ENCODE measurements at regions of chr18 and their contacts with region 1.

Region 1: DNA sequence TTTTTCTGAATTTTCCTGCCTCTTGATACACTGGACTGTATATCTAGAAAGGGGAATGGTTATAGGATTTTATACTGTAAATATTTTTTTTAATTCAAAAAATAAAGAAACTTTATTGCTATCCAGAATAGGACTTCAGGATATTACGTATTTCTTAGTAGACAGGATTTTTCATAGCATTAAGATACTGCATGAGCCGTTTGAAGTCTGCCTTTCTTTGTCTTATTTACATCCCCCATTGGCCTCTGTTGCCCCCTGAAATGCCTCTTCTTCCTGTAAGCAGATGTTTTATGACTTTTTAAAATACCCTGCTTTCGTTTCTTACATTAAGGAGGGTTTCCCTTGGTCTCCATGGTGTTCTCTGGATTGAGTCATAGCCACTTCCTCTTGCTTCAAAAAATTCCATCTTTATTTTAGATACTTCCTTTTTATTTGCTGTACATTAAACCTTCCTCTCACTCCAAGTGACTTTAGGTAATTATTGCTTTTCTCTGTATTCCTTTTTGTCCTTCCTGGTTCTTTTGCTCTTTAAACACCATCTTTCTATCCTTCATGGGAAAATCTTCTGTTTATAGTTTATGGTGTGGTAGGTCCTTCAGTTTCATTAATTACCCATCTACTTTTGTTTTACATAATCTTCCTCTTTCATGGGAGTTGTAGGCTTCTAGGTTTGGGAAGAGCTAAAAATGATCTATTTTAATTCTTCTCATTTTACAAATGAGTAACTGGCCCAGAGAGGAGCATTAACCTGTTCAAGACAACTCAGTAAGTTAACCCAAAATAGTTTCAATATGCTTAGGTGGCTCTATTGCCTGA is 72.6 kb downstream of the ZNF532 start:
- DNase-seq: no peak
- H3K4me3 ChIP-seq: no peak overlapping the region
- H3K27ac ChIP-seq: no peak overlapping the region
- H3K4me1 ChIP-seq: peaks cover under 1% of the 10 kb centered on the region; the same call in 1 of the 2 replicates
- H3K27me3 ChIP-seq: no peaks in the 10 kb centered on the region
- CTCF ChIP-seq: no peak

Region 2: GRCh38 chr18:60070631-60071030 is 1133.4 kb after region 1 on chr18:
- CTCF ChIA-PET with region 1: no interaction called
- POLR2A ChIA-PET with region 1: interaction called, 10 read pairs
- intact Hi-C with region 1: no loop called
- DNase-seq: no peak
- H3K4me3 ChIP-seq: no peak overlapping the region
- H3K27ac ChIP-seq: no peak overlapping the region
- H3K4me1 ChIP-seq: no peaks in the 10 kb centered on the region
- H3K27me3 ChIP-seq: no peaks in the 10 kb centered on the region
- CTCF ChIP-seq: no peak